Activated CD4-positive, alpha-beta T cell treated with anti-CD3 and anti-CD28 coated beads for 36 hours (primary cell): ENCODE measurements at regions of chr5 and their contacts with region 1.

Region 1: GRCh38 chr5:177336112-177336511 is 15.4 kb downstream of the LMAN2 start:
- DNase-seq: peak; percentile 75
- ATAC-seq: peak; percentile 91
- H3K4me3 Mint-ChIP-seq: no peak overlapping the region
- H3K27ac Mint-ChIP-seq: no peak overlapping the region
- H3K4me1 Mint-ChIP-seq: peaks cover 13% of the 10 kb centered on the region
- H3K27me3 Mint-ChIP-seq: no peaks in the 10 kb centered on the region

Region 2: DNA sequence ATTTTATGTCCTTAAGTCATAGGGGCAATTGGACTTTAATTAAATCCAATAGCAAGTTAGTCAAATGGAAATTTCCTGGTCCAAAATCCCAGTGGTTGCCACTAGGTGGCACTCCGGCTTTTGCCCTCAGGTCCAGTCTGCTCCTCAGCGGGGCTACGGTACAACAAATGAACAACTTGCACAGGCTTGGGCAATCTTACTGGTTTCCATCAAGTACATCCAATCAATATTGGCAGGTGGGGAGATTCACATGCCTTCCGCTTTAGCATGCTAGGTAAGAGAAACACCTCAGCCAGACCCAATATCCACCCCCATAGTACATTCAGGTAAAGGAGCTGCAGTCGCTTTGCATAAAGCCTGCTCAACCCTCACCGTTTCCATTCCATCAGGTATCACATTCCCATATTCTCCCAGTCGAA is 18.1 kb before region 1 on chr5:
- CTCF ChIA-PET with region 1: interaction called, 8 read pairs
- POLR2A ChIA-PET with region 1: no interaction called
- intact Hi-C with region 1: loop called in 1 of 2 experiments (anchors 2 kb)
- DNase-seq: peak; percentile 87
- ATAC-seq: peak; percentile 75
- H3K4me3 Mint-ChIP-seq: no peak overlapping the region
- H3K27ac Mint-ChIP-seq: no peak overlapping the region
- H3K4me1 Mint-ChIP-seq: peaks cover 19% of the 10 kb centered on the region
- H3K27me3 Mint-ChIP-seq: no peaks in the 10 kb centered on the region